GM10248 (cell line): ENCODE measurements at regions of chr3 and their contacts with region 1.

Region 1: DNA sequence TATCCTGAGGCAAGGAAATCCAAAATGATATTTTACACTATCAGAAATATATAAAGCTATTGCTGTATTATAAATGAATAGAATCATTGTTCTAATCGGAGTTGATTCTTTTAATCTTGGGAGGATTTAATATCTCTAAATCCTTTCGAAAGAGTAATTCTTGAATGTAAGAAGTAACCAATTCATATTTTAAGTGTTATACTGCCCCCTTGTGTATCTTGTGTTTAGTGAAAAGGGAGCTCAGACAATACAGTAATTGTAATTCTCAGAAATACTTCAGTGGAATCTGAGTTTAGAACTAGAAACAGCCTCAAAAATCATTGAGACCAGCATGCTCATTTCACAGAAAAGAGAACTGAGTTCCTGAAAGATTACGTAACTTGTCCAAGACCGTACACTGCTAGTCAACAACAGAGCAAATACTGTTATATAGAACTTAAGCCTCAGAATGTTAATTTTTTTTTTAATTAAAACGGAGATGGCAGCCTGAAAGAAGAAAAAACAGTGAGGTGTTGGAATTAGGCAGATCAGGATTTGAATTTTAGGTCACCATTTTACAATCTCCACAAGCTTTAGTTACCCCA is 42.9 kb downstream of the PLCH1 start:
- DNase-seq: peak; percentile 31
- CTCF ChIP-seq: peak; percentile 61

Region 2: DNA sequence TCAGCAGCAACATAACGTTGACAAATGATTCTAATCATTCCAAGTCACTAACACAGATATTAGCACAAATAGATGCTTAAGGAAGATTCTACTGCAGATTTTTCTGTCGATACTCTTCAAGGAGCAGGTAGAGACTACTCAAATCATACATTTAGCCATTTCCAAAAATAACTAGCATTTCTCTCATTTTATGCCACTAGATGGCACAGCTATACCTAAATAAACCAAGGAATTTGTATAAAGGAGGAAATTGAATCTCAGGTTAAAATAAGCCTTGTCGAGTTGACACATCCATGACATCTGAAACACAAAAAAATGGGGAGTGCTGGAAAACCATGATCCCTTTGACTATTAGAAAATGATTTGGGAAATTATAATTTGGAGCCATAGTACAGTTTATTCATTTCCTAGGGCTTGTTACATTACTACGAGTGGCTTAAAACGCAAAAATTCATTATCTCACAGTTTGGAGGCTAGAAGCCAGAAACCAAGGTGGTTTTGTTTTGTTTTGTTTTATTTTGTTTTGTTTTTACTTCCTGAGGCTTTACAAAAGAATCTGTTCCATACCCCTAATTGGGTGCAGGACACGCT is 349.0 kb before region 1 on chr3:
- CTCF ChIA-PET with region 1: interaction called, 36 read pairs
- POLR2A ChIA-PET with region 1: no interaction called
- DNase-seq: peak; percentile 10
- CTCF ChIP-seq: peak; percentile 26

Region 3: GRCh38 chr3:155382396-155383042 is 319.5 kb before region 1 on chr3:
- CTCF ChIA-PET with region 1: interaction called, 52 read pairs
- POLR2A ChIA-PET with region 1: no interaction called
- DNase-seq: peak; percentile 23
- CTCF ChIP-seq: peak; percentile 47

Region 4: GRCh38 chr3:155535098-155535497 is 166.9 kb before region 1 on chr3:
- CTCF ChIA-PET with region 1: no interaction called
- POLR2A ChIA-PET with region 1: no interaction called
- DNase-seq: no peak
- CTCF ChIP-seq: no peak

Region 5: DNA sequence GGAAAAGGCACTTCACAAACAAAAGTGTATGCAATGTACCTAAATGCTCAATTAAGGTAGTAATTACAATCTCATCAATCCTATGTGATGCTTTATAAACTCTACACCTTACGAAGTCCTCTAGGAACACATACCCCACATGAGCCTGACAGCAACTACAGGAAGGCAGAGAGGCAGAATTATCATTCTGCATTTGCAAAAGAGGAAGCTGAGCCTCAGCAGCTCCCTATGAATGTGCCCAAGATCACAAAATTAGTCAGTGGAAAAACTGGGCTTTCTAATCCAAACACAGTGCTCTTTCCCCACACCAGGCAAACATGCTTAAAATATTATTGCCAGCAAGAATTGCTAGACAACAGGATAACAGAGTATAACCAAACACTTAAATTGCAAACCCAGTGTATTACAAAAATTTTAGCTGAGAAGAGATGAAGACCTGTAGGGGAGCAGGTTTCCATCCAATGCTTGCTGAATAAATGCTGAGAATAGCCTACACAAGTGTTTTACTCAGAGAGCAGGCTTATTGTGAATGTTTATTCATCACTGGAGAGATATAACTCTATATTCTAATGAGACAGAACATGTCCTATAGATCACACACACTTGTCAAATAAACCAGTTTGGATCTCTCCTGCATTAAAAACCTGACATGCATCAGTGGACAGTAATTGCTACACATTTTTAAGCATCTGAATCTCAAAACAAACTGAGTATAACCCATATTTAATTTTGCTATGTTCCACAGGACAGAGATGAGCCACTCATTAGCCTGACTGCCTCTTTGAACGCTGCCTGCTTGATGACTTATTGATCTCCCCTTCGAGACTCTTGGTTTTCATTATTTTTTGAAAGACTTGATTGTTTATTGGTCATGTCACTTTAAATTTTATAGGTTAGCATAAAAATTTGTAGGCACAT is 19.3 kb before region 1 on chr3:
- CTCF ChIA-PET with region 1: interaction called, 13 read pairs
- POLR2A ChIA-PET with region 1: no interaction called
- DNase-seq: no peak
- CTCF ChIP-seq: no peak

Region 6: DNA sequence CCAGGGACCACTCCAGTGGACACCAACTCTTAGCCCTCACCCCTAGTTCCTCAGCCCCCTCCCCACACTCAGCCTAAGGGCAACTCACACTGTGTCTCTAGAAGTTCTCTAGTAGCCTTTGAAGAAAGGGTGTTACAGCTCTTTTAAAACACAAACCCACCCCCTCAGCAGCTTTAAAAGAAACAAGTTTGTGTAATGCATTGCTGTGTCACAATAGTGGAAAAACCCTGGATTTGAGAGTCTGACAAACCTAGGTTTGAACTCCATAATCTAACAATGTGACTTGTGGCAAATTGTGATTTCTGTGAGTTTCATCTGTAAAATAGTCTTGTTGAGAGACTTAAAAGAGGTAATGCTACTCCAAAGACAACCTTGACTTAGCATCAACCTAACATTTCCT is 11.1 kb before region 1 on chr3:
- CTCF ChIA-PET with region 1: interaction called, 13 read pairs
- POLR2A ChIA-PET with region 1: no interaction called
- DNase-seq: no peak
- CTCF ChIP-seq: no peak

Region 7: DNA sequence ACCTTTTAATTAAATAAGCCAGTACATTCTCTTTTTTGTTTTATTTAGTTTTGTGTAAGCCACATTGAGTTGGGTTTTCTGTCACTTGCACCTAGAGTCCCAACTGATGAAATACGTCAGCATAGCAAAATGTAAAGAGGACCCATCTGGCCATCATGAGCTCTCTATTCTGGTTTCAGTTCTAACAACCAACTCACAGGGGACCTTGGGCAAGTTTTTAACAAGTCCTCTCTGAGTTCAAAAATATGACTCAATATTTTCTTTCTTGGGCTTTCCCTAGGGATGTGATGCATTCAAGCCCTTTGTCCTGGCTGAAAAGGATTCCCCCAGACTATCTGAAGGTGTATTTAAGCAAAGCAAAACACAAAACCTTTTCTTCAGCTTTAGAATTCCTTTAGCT is 10.0 kb after region 1 on chr3:
- CTCF ChIA-PET with region 1: interaction called, 48 read pairs
- POLR2A ChIA-PET with region 1: no interaction called
- DNase-seq: peak; percentile 33
- CTCF ChIP-seq: no peak

Region 8: GRCh38 chr3:155744626-155745324 is 42.8 kb after region 1 on chr3 and contains the start of gene PLCH1:
- CTCF ChIA-PET with region 1: no interaction called
- POLR2A ChIA-PET with region 1: no interaction called
- DNase-seq: peak; percentile 67
- CTCF ChIP-seq: no peak